Heart left ventricle (tissue), 16 donors: ENCODE measurements at regions of chr11 and their contacts with region 1.

Region 1: GRCh38 chr11:21933095-21933494 is 259.8 kb upstream of the ANO5 start:
- DNase-seq: no peak
- ATAC-seq: no peak
- H3K4me3 ChIP-seq: no peak overlapping the region
- H3K27ac ChIP-seq: no peak overlapping the region
- H3K4me1 ChIP-seq: no peaks in the 10 kb centered on the region
- H3K27me3 ChIP-seq: no peaks in the 10 kb centered on the region
- CTCF ChIP-seq: peak; percentile 16 to 55 (median 40)
- POLR2A ChIP-seq: no peak

Region 2: GRCh38 chr11:21839796-21840195 is 93.3 kb before region 1 on chr11:
- intact Hi-C with region 1: no loop called
- DNase-seq: no peak
- ATAC-seq: no peak
- H3K4me3 ChIP-seq: no peak overlapping the region
- H3K27ac ChIP-seq: no peak overlapping the region
- H3K4me1 ChIP-seq: no peaks in the 10 kb centered on the region
- H3K27me3 ChIP-seq: no peaks in the 10 kb centered on the region
- CTCF ChIP-seq: no peak
- POLR2A ChIP-seq: no peak

Region 3: DNA sequence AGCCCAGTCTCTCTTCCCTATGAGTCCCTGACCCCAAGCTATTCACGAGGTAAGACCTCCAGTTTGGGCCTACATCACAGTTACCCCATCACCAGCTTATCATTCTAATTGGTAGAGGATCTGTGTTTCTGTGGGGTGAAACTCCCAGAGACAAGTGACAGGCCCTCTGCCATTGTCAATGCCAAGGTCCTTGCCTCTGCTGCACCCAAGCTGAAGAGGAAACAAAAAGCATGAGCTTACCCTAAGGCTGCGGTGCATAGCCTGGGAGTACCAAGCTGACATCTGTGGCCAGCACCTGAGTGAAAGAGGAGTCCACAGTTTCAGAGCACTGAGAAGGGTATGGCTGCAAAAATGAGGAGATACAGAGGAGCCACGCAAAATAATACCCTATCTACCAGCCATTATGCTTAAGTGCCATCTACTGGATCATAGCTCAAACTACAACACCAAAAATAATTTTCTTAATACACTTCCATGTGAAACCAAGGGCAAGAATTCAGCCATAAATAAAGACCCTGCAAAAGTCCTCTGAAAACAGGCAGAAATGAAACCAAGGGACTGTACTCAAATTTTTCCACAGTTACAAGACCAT is 197.5 kb after region 1 on chr11:
- intact Hi-C with region 1: loop called in 1 of 10 experiments (anchors 10 kb)
- DNase-seq: no peak
- ATAC-seq: peak in 3 of 4 donors; percentile 39 to 47 (median 45)
- H3K4me3 ChIP-seq: no peak overlapping the region
- H3K27ac ChIP-seq: no peak overlapping the region
- H3K4me1 ChIP-seq: no peaks in the 10 kb centered on the region
- H3K27me3 ChIP-seq: no peaks in the 10 kb centered on the region
- CTCF ChIP-seq: peak; percentile 28 to 60 (median 47)
- POLR2A ChIP-seq: no peak

Region 4: DNA sequence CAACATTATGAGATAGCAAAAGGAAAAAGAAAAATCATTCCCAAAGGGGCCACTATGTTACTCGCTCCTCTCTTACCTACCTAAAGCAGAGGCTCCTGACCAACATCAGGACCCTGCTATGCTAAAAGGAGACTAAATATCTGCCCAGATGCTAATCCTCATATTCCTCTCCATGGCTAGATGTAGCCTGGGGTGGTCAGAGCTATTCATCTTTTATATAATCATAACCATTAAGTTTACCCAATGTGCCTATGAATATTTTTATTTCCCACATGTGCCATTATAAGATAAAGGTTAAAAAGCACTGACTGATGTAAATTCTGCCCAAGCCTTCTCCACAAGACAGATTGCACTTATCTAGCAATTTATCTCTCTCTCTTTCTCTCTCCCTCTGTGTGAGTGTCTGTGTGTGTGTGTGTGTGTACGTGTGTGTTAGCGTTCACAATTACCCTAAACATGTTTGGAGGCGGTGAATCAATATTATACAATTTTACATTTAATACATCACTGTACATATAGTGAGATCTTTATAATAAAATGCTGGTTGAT is 218.6 kb after region 1 on chr11:
- intact Hi-C with region 1: loop called in 1 of 10 experiments (anchors 10 kb)
- DNase-seq: no peak
- ATAC-seq: no peak
- H3K4me3 ChIP-seq: no peak overlapping the region
- H3K27ac ChIP-seq: no peak overlapping the region
- H3K4me1 ChIP-seq: no peaks in the 10 kb centered on the region
- H3K27me3 ChIP-seq: peaks cover 0 to 3% (median 0%) of the 10 kb centered on the region in 9 donors
- CTCF ChIP-seq: no peak
- POLR2A ChIP-seq: no peak